ENCODE measurements at regions of chr22 and their contacts with region 1.

Region 1: DNA sequence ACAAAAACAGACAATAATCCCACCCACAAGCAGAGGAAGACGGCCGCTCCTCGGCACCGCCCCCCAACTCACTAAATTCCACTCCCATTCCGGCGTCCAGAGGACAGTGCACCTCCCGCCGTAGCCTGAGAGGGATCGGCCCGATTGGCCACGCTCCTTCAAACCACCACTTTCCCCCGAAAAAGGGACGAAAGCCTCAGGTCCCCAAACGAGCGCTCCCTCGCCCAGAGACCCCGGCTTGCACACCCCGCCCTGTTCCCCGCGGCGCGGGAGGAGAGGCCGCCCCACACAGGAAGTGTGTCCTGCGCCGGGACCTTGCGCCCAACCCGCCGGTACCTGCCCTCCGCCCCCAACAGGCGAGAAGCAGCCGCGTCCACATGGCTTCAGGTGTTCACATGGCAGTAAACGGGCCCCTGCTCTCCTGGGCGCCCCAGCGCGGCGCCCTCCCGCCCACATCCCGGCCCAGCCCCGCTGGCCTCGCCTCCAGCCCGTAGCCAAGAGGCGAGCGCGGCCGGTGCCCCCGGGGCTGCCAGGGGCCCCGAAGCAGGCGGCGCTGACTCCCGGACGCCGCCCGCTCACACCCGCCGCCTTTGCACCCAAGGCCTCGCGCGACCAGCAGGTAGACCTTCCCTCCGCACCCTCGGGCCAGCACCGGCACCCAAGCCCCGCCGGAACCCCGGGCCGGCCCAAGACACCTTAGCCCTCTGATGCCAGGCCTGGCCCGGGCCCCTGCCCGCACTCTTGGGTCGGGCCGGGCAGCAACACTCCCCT is 861 bp downstream of the TCF20 start:
- DNase-seq: peak; percentile 80
- H3K4me3 Mint-ChIP-seq: peak overlapping the region; percentile 92
- H3K27ac Mint-ChIP-seq: peak overlapping the region; percentile 72
- H3K4me1 Mint-ChIP-seq: peaks cover 45% of the 10 kb centered on the region
- H3K27me3 Mint-ChIP-seq: no peaks in the 10 kb centered on the region

Region 2: DNA sequence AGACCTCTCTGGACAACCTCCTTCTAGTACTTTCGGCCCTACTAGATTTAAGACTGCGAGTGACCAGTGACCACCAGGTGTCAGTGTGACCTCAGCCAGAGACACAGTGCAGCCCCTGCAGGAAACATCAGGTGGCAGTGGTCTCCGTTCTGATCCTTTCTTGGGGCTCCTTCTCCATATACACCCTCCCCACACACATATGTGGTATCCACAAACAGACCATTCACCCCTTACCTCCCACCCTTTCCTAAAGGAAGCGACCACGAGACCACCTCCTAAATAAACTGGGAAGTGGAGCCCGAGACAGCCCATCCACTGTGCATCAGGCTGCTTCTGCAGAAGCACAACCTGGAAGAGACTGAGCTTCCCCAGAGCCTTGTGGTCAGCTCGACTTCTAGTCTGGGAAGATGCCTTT is 100.5 kb before region 1 on chr22:
- CTCF ChIA-PET with region 1: interaction called, 5 read pairs
- intact Hi-C with region 1: loop called (anchors 5 kb)
- DNase-seq: peak; percentile 85
- H3K4me3 Mint-ChIP-seq: no peak overlapping the region
- H3K27ac Mint-ChIP-seq: no peak overlapping the region
- H3K4me1 Mint-ChIP-seq: peaks cover 15% of the 10 kb centered on the region
- H3K27me3 Mint-ChIP-seq: no peaks in the 10 kb centered on the region

Region 3: GRCh38 chr22:42188808-42189447 is 80.7 kb before region 1 on chr22:
- CTCF ChIA-PET with region 1: no interaction called
- intact Hi-C with region 1: loop called (anchors 2 kb)
- DNase-seq: no peak
- H3K4me3 Mint-ChIP-seq: no peak overlapping the region
- H3K27ac Mint-ChIP-seq: no peak overlapping the region
- H3K4me1 Mint-ChIP-seq: peaks cover 84% of the 10 kb centered on the region
- H3K27me3 Mint-ChIP-seq: no peaks in the 10 kb centered on the region

Region 4: GRCh38 chr22:42222140-42222539 is 47.5 kb before region 1 on chr22:
- CTCF ChIA-PET with region 1: no interaction called
- intact Hi-C with region 1: loop called (anchors 5 kb)
- DNase-seq: no peak
- H3K4me3 Mint-ChIP-seq: no peak overlapping the region
- H3K27ac Mint-ChIP-seq: peak overlapping the region; percentile 55
- H3K4me1 Mint-ChIP-seq: peaks cover 51% of the 10 kb centered on the region
- H3K27me3 Mint-ChIP-seq: no peaks in the 10 kb centered on the region

Region 5: GRCh38 chr22:42511401-42511891 is 241.9 kb after region 1 on chr22:
- CTCF ChIA-PET with region 1: no interaction called
- intact Hi-C with region 1: no loop called
- DNase-seq: no peak
- H3K4me3 Mint-ChIP-seq: no peak overlapping the region
- H3K27ac Mint-ChIP-seq: peak overlapping the region; percentile 24
- H3K4me1 Mint-ChIP-seq: no peaks in the 10 kb centered on the region
- H3K27me3 Mint-ChIP-seq: no peaks in the 10 kb centered on the region

Measured in activated naive CD4-positive, alpha-beta T cell treated with anti-CD3 and anti-CD28 coated beads for 36 hours (primary cell).